ENCODE measurements at regions of chr11 and their contacts with region 1.

Region 1: DNA sequence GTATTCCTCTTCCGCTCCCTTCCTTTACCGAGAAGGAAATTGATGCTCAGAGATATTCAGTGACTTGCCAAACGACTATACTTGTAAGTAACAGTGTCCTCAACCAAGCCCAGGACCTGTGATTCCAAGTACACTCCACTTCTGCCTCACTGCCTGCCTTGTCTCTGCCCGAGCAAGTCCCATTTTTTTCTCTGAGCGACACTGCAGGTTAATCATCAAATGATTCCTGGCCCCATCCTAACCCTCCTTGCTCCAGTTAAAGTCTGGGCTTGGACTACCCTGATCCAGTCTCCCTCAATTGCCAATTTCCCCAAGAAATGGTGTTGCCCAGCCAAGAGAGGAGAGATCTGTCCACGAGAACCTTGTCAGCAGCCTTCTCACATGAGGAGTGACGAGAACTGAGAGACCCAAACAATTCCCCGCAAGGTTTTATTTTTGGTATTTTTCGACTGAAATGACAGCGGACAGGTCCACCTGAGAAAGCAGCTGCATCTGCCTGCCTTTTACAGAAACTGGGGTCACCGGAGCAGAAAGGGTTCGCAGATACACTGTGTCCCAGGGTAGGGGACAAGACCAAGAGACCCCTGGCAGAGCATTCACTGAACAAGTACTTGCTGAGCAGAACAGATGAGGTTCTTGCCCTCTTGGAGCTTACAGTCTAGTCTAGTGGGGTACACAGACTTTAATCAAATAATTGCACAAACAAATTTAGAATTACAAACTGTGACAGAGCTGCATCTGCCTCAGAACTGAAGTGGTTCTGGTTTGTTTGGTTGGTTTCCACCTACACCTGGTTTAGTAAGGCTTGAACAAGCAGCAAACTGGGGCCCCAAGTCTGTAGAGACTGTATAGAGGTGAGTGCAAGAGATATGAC is 11.4 kb downstream of the POU2AF1 start:
- DNase-seq: no peak
- H3K4me3 ChIP-seq: peak overlapping the region in 1 of 8 donors; percentile 42
- H3K27ac ChIP-seq: peak overlapping the region in 7 of 8 donors; percentile 22 to 81 (median 58)
- H3K4me1 ChIP-seq: peaks cover 0 to 92% (median 34%) of the 10 kb centered on the region in 6 donors
- H3K27me3 ChIP-seq: no peaks in the 10 kb centered on the region
- CTCF ChIP-seq: no peak
- POLR2A ChIP-seq: no peak

Region 2: DNA sequence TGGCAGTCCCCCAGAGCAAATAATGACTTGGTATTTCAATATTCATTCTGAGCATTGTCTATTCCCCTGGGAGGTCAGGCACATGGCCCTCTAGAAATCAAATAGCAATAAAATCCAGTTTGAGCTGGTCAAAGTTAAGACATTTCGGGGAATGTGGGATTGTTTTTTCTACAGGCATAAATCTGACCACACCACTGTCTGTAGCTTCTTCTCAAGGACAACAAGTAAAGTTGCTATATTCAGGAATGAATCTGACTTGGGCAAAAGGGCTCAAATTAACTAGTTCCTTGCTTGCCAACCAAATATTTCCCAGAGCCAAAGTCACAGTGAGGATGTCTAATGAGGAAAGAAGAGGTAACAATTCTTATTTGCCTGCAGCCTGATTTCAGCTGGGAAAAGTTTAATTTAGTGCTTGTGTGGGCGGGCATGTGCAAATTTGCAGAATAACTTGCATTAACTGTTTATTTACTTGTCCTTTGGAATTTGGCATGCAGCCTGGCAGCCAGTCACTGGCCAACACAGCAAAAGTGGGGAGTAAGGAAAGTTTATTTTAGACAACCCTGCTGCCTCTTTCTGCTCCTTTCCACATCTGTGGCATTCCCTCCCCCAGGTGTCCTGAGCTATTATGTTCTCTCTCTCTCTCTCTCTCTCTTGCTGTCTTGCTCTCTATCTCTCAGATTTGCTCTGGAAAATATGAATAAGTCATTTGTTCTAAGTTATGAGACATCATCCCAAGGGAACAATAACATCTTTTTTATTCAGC is 604.2 kb before region 1 on chr11:
- intact Hi-C with region 1: no loop called
- DNase-seq: no peak
- H3K4me3 ChIP-seq: no peak overlapping the region
- H3K27ac ChIP-seq: no peak overlapping the region
- H3K4me1 ChIP-seq: peaks cover 0 to 3% (median 0%) of the 10 kb centered on the region in 6 donors
- H3K27me3 ChIP-seq: no peaks in the 10 kb centered on the region
- CTCF ChIP-seq: no peak
- POLR2A ChIP-seq: no peak

Region 3: DNA sequence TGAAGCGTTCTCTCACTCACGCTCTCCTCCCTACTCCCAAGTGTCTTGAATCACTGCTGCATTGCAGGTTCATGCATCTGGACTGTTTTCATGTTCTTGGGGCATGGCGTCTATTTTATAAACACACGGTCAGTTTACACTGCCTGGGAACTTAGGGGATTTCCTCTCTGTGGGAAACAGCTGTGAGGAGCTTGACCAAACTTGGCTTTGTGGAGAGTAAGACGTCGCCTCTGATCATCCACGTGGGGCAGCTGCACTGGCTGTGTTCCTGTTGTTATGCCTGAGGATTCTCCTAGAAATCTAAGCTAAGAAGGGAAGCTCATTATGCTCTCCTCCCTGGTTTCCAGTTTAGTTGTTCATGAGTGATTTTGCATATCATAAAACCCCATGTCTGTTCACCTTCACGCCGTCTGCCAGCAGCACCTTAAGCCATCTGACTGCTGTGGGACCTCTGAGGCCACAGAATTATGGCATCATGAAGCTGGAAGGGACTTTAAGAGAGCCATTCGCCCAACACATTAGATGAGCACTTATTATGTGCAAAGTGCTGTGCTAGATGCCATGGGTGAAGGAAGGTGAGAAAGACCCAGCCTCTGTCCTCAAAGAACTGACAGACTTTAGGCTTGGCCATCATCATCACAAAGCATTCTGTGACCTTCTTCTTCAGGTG is 50.3 kb after region 1 on chr11:
- intact Hi-C with region 1: loop called (anchors 10 kb)
- DNase-seq: peak; percentile 74
- H3K4me3 ChIP-seq: peak overlapping the region in 1 of 8 donors; percentile 47
- H3K27ac ChIP-seq: peak overlapping the region; percentile 8 to 86 (median 73)
- H3K4me1 ChIP-seq: peaks cover 17 to 85% (median 63%) of the 10 kb centered on the region in 6 donors
- H3K27me3 ChIP-seq: no peaks in the 10 kb centered on the region
- CTCF ChIP-seq: no peak
- POLR2A ChIP-seq: no peak

Region 4: GRCh38 chr11:111479666-111480065 is 112.0 kb after region 1 on chr11:
- intact Hi-C with region 1: no loop called
- DNase-seq: no peak
- H3K4me3 ChIP-seq: no peak overlapping the region
- H3K27ac ChIP-seq: no peak overlapping the region
- H3K4me1 ChIP-seq: no peaks in the 10 kb centered on the region
- H3K27me3 ChIP-seq: peaks cover 0 to 8% (median 0%) of the 10 kb centered on the region in 7 donors
- CTCF ChIP-seq: no peak
- POLR2A ChIP-seq: no peak

Measured in spleen (tissue), 13 donors.